Ovary (tissue), 10 donors: ENCODE measurements at regions of chr4 and their contacts with region 1.

Region 1: GRCh38 chr4:37908488-37909331 is 17.8 kb downstream of the TBC1D1 start:
- DNase-seq: peak in 4 of 5 donors; percentile 21 to 49 (median 28)
- H3K4me3 ChIP-seq: peak overlapping the region; percentile 10
- H3K27ac ChIP-seq: peak overlapping the region; percentile 40
- H3K4me1 ChIP-seq: peaks cover 3% of the 10 kb centered on the region
- H3K27me3 ChIP-seq: no peaks in the 10 kb centered on the region
- CTCF ChIP-seq: no peak
- EP300 ChIP-seq: no peak
- POLR2A ChIP-seq: no peak

Region 2: DNA sequence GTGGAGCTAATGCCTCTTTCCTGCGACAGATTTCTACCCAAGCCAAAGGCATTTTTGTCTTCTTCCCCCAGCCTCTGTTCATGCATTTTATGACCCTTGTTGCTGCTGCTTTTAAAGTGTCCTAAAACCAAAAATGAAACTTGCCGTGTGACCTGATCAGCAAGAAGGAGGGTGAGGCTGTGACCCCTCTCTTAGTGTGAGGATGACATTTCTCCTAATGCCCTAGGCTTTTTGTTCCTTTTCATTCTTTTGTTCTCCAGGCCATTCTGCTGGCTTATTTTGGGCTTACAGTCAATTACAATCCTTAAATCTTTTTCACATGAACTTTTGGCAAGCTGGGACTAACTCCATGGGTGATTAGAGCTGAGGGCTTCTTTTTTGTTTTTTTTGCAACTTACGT is 85.9 kb after region 1 on chr4:
- intact Hi-C with region 1: loop called in 1 of 4 experiments (anchors 5 kb)
- DNase-seq: no peak
- H3K4me3 ChIP-seq: no peak overlapping the region
- H3K27ac ChIP-seq: peak overlapping the region in 1 of 2 donors; percentile 24
- H3K4me1 ChIP-seq: peaks cover 23% of the 10 kb centered on the region
- H3K27me3 ChIP-seq: no peaks in the 10 kb centered on the region
- CTCF ChIP-seq: no peak
- EP300 ChIP-seq: no peak
- POLR2A ChIP-seq: no peak